ENCODE measurements at regions of chr17 and their contacts with region 1.

Region 1: GRCh38 chr17:45385331-45385997 is 47.2 kb downstream of the ARHGAP27 start:
- DNase-seq: peak; percentile 92
- H3K4me3 ChIP-seq: no peak overlapping the region
- H3K27ac ChIP-seq: no peak overlapping the region
- H3K4me1 ChIP-seq: no peaks in the 10 kb centered on the region
- H3K27me3 ChIP-seq: no peaks in the 10 kb centered on the region
- CTCF ChIP-seq: peak; percentile 99

Region 2: DNA sequence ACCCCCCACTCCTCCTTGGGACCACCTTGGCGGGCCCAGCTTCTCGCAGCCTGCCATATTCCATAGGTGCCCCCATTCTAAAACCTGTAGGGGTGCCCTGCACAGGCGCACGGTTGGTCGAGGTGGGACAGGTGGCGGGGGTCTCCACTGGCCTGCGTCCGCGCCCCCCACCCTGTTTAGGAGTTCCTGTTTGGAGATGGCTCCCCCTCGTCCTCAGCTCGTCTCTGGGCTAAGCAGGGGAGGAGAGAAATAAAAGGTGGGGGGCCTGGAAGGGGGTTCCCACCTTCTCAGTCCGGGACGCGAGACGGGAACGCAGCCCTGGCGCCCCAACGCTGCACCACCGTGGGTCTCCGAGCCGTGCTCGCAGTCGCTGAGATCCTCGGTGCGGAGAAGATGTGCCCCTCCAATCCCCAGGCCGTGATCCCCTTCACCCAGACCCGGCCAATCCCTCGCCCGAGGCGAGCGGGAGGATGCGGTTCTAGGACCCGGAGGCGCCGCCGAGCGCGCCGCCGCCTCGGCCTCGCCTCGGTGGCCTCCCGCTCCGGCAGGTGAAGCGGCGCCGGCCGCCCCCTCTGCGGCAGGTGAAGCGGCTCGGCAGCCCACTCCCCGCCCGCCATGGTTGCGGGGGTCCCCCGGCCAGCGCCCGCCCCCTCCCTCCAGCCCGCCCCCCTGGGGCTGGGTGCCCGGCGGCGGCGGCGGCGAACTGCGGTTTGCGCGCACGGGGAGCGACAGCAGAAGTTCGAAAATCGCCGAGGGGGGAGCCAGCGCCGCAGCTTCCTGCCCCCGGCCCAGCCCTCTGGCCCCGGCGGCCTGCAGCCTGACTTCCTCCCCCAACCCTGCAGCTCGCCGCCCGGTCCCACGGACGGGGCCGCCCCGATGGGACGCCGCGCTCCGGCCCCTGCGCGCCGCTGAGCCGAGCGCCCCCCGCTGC is 164.1 kb before region 1 on chr17 and contains the start of gene FMNL1:
- intact Hi-C with region 1: loop called (anchors 2 kb)
- DNase-seq: peak; percentile 47
- H3K4me3 ChIP-seq: peak within 1 kb of the TSS; percentile 42
- H3K27ac ChIP-seq: peak within 1 kb of the TSS; percentile 84
- H3K4me1 ChIP-seq: no peaks in the 10 kb centered on the region
- H3K27me3 ChIP-seq: peaks cover 18% of the 10 kb centered on the region
- CTCF ChIP-seq: no peak
- total RNA-seq, gene FMNL1: 6.8 to 8.4 TPM

Region 3: GRCh38 chr17:45277216-45277849 is 108.1 kb before region 1 on chr17:
- intact Hi-C with region 1: loop called (anchors 1 kb)
- DNase-seq: peak; percentile 94
- H3K4me3 ChIP-seq: no peak overlapping the region
- H3K27ac ChIP-seq: no peak overlapping the region
- H3K4me1 ChIP-seq: peaks cover 5% of the 10 kb centered on the region
- H3K27me3 ChIP-seq: no peaks in the 10 kb centered on the region
- CTCF ChIP-seq: peak; percentile 63